ENCODE measurements at regions of chr18 and their contacts with region 1.

Region 1: GRCh38 chr18:12255626-12256026 is 1.5 kb downstream of the CIDEA start:
- DNase-seq: peak; percentile 50
- ATAC-seq: peak; percentile 65
- H3K4me3 ChIP-seq: no peak overlapping the region
- H3K27ac ChIP-seq: no peak overlapping the region
- H3K4me1 ChIP-seq: peaks cover 4 to 18% of the 10 kb centered on the region in 2 experiments; a peak in 2 of 4 replicates
- H3K27me3 ChIP-seq: no peaks in the 10 kb centered on the region
- CTCF ChIP-seq: no peak
- POLR2A ChIP-seq: no peak
- RAD21 ChIP-seq: no peak

Region 2: DNA sequence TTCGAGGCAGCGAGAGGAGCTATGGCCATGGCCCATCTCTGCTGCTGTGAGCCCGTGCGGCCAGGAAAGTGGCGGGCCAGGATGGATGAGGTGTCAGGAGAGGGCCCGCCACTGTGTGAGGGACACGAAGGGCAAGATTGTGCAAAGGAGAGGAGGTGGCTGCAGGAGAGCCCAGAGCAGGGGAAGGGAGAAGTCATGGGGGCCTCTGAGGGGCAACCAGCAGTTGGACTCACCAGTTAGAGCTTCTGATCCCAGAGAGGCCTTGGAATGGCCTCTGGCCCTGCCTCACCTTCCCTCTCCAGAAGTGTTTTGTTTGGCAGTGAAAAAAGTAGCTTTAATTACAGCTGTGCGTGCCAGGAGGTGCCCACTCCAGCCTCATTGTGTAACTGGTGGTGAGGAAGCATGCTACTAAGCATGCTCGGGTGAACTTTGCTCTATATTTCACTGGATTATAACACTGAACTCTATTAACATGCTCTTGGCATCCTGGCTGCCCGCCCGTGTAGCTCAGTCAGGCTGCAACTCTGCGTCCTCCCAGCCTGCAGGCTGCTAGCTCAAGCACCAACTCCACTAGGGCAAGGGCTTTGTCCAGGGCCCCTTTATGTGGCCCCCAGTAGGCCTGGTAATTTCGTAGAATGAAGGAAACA is 240.1 kb before region 1 on chr18:
- CTCF ChIA-PET with region 1: no interaction called
- POLR2A ChIA-PET with region 1: no interaction called
- RAD21 ChIA-PET with region 1: no interaction called
- intact Hi-C with region 1: no loop called
- DNase-seq: no peak
- ATAC-seq: no peak
- H3K4me3 ChIP-seq: no peak overlapping the region
- H3K27ac ChIP-seq: no peak overlapping the region
- H3K4me1 ChIP-seq: no peaks in the 10 kb centered on the region
- H3K27me3 ChIP-seq: no peaks in the 10 kb centered on the region
- CTCF ChIP-seq: no peak
- POLR2A ChIP-seq: no peak
- RAD21 ChIP-seq: no peak

Region 3: DNA sequence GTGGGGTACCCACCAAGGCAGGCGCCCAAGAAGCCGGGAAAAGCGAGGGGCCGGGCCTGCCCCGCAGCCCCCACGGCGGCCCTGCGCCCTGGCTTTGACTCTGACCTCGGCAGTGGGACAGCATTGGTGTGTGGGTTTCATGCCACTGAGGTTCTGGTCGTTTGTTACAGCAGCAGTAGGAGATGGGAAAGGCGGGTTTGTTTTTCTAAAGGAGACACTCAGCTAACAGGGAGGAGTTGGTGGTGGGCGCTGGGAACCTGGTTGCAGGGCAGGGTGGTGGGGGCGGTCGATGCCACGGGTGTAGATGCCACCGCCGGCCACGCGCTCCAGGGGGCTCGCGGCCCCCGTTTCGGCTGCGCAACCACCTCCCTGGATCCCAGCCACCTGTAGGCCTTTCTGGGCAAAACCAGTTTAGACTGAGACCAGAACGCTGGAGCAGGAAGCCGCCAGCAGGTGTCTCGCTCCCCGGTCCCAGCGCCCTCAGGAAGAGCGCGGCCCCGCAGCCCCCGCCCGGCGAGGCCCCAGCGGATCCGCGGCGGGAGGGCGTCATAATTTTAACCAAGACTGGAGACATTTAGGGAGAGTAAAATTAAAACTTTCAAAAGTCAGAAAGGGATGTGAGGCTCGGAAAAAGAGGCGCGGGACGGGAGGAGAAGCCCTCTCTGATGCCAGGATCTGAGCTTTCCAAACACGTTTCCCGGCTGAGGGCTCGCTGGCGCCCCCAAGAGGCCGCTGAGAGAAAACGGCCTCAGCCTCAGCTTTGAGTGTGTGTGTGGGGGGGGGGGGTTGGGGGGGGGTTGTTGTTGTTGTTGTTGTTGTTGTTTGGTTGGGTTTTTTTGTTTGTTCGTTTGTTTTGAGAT is 16.0 kb after region 1 on chr18:
- CTCF ChIA-PET with region 1: interaction called, 17 read pairs
- POLR2A ChIA-PET with region 1: no interaction called
- RAD21 ChIA-PET with region 1: no interaction called
- intact Hi-C with region 1: no loop called
- DNase-seq: peak; percentile 49
- ATAC-seq: peak; percentile 94
- H3K4me3 ChIP-seq: peak overlapping the region; percentile 4 to 45; a peak in 3 of 4 replicates
- H3K27ac ChIP-seq: peak overlapping the region; percentile 43; the same call in 1 of the 2 replicates
- H3K4me1 ChIP-seq: peaks cover 0 to 7% of the 10 kb centered on the region in 2 experiments; a peak in 2 of 4 replicates
- H3K27me3 ChIP-seq: no peaks in the 10 kb centered on the region
- CTCF ChIP-seq: peak; percentile 59 to 92 (median 71); a peak in 5 of 6 replicates
- POLR2A ChIP-seq: no peak
- RAD21 ChIP-seq: no peak

Measured in HCT116 (cell line).